Activated CD4-positive, alpha-beta T cell treated with anti-CD3 and anti-CD28 coated beads, Interleukin-2, amount 10 ng/mL, durations not matched to agents 24 days and 14 days (primary cell): ENCODE measurements at regions of chr6 and their contacts with region 1.

Region 1: GRCh38 chr6:158559895-158560835 is at the start of gene TMEM181:
- DNase-seq: peak; percentile 96
- H3K4me3 Mint-ChIP-seq: peak within 1 kb of the TSS; percentile 98
- H3K27ac Mint-ChIP-seq: peak within 1 kb of the TSS; percentile 96
- H3K4me1 Mint-ChIP-seq: peaks cover 37% of the 10 kb centered on the region
- H3K27me3 Mint-ChIP-seq: peaks cover 12% of the 10 kb centered on the region
- total RNA-seq, gene TMEM181: 17.1 and 17.8 TPM in 2 replicates

Region 2: GRCh38 chr6:158231551-158232315 is 328.4 kb before region 1 on chr6:
- intact Hi-C with region 1: loop called (anchors 5 kb)
- DNase-seq: peak; percentile 94
- H3K4me3 Mint-ChIP-seq: peak overlapping the region; percentile 89
- H3K27ac Mint-ChIP-seq: peak overlapping the region; percentile 90
- H3K4me1 Mint-ChIP-seq: peaks cover 23% of the 10 kb centered on the region
- H3K27me3 Mint-ChIP-seq: peaks cover 11% of the 10 kb centered on the region

Region 3: GRCh38 chr6:158518191-158519127 is 41.7 kb before region 1 on chr6:
- intact Hi-C with region 1: loop called (anchors 2 kb)
- DNase-seq: peak; percentile 90
- H3K4me3 Mint-ChIP-seq: peak overlapping the region; percentile 91
- H3K27ac Mint-ChIP-seq: peak overlapping the region; percentile 90
- H3K4me1 Mint-ChIP-seq: peaks cover 27% of the 10 kb centered on the region
- H3K27me3 Mint-ChIP-seq: peaks cover 16% of the 10 kb centered on the region

Region 4: DNA sequence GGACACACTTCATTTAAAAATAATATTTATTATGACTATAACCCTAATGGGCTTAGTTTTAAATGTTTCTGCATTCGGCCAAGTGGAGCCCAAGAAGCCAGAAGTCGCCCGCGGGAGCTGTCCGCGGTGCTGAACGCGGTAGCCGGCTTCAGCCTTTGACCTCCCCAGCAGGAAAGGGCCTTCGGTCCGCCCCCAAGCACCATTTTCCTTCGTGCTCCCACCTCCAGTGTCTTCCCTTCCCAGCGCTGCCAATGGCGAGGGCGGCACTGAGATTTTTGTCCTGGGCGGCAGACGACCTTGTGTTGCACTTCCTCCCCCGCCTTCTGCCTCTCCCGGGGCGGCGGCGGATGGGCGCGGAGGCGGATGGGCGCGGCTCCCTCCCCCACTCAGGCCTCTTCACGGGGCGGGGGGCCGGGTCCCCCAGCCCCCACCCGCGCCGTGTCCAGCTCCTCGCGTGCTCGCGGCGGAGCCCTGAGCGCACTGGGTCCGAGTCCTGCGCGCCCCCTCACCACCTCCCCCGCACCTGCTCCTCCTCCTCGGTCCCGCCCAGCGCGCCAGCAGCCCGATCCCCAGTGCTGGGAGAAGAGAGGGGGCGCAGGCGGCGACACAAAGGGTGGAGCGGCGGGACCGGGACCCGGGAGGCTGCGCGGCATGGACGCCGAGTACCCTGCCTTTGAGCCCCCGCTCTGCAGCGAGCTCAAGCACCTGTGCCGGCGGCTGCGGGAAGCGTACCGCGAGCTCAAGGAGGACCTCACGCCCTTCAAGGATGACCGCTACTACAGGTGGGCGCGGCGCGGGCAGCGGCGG is 23.9 kb before region 1 on chr6:
- intact Hi-C with region 1: loop called (anchors 2 kb)
- DNase-seq: peak; percentile 94
- H3K4me3 Mint-ChIP-seq: peak overlapping the region; percentile 78
- H3K27ac Mint-ChIP-seq: no peak overlapping the region
- H3K4me1 Mint-ChIP-seq: no peaks in the 10 kb centered on the region
- H3K27me3 Mint-ChIP-seq: peaks cover 52% of the 10 kb centered on the region

Region 5: GRCh38 chr6:158644231-158645063 is 84.3 kb after region 1 on chr6 and contains the start of gene DYNLT1:
- intact Hi-C with region 1: loop called (anchors 5 kb)
- DNase-seq: peak; percentile 98
- H3K4me3 Mint-ChIP-seq: peak within 1 kb of the TSS; percentile 97
- H3K27ac Mint-ChIP-seq: peak within 1 kb of the TSS; percentile 97
- H3K4me1 Mint-ChIP-seq: peaks cover 72% of the 10 kb centered on the region
- H3K27me3 Mint-ChIP-seq: no peaks in the 10 kb centered on the region
- total RNA-seq, gene DYNLT1: 103 and 110 TPM in 2 replicates

Region 6: GRCh38 chr6:158958504-158959386 is 398.6 kb after region 1 on chr6:
- intact Hi-C with region 1: no loop called
- DNase-seq: peak; percentile 61
- H3K4me3 Mint-ChIP-seq: no peak overlapping the region
- H3K27ac Mint-ChIP-seq: no peak overlapping the region
- H3K4me1 Mint-ChIP-seq: peaks cover 8% of the 10 kb centered on the region
- H3K27me3 Mint-ChIP-seq: peaks cover 4% of the 10 kb centered on the region